Right ventricle myocardium inferior (tissue), 1 donor: ENCODE measurements at regions of chrX and their contacts with region 1.

Region 1: DNA sequence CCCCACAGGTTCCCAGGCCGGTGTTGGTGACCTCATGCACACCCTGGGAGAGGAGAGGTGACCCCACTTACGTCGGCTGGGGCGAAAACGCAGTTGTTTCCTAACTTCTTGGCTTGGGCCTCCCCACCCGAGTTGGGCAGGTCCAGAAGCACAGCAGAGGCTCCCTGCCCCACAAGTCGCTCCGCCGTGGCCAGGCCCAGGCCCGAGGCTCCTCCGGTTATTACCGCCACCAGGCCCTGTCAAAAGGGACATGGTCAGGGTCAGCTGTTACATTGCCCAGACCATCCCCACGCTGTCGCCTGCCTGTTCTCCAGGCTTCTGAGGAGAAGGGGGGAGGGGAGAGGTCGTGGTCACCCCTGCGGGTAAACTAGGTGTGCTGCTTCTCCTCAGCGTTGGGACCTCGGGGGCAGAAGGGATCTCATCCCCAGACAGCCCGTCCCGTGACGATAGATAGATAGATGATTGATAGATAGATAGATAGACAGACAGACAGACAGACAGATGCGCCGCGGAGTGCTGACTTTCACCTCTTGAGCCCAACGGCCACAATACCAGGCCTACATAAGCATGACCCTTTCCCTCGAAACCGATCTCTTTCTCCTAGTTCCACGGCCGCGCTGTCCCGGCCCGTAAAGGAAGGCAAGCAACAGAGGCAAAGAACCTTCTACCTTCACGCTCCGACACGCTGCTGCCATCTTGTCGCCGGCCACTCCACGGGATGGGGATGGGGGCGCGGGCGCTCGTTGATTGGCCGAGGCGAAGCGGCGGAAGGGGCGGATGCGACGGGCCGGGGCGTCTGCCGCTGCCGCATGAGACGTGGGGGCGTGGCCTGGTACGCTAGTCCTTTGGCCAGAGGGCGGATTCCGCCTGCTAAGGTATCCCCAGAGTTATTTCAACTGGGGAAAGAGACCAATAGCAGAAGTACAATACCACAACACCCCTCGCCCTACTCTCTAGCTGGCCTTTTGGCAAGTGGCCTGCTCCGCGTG is at the start of gene HSD17B10:
- DNase-seq: peak; percentile 96
- ATAC-seq: peak; percentile 99
- total RNA-seq, gene HSD17B10: 116 TPM

Region 2: GRCh38 chrX:53128097-53128749 is 305.7 kb before region 1 on chrX:
- intact Hi-C with region 1: no loop called
- DNase-seq: no peak
- ATAC-seq: no peak

Region 3: GRCh38 chrX:53239474-53239873 is 194.5 kb before region 1 on chrX:
- intact Hi-C with region 1: no loop called
- DNase-seq: no peak
- ATAC-seq: no peak

Region 4: GRCh38 chrX:53284684-53285447 is 149.1 kb before region 1 on chrX:
- intact Hi-C with region 1: loop called (anchors 10 kb)
- DNase-seq: no peak
- ATAC-seq: peak; percentile 22

Region 5: GRCh38 chrX:53317365-53318069 is 116.4 kb before region 1 on chrX:
- intact Hi-C with region 1: loop called (anchors 2 kb)
- DNase-seq: peak; percentile 70
- ATAC-seq: peak; percentile 71